CD8-positive, alpha-beta T cell (primary cell): ENCODE measurements at regions of chr11 and their contacts with region 1.

Region 1: GRCh38 chr11:104758032-104758431 is 140.2 kb downstream of the CASP12 start:
- DNase-seq: no peak
- ATAC-seq: no peak
- H3K4me3 ChIP-seq: no peak overlapping the region
- H3K4me3 Mint-ChIP-seq: no peak overlapping the region
- H3K27ac ChIP-seq: no peak overlapping the region
- H3K27ac Mint-ChIP-seq: no peak overlapping the region
- H3K4me1 ChIP-seq: no peaks in the 10 kb centered on the region
- H3K4me1 Mint-ChIP-seq: no peaks in the 10 kb centered on the region
- H3K27me3 ChIP-seq: no peaks in the 10 kb centered on the region
- H3K27me3 Mint-ChIP-seq: no peaks in the 10 kb centered on the region
- CTCF ChIP-seq: no peak

Region 2: DNA sequence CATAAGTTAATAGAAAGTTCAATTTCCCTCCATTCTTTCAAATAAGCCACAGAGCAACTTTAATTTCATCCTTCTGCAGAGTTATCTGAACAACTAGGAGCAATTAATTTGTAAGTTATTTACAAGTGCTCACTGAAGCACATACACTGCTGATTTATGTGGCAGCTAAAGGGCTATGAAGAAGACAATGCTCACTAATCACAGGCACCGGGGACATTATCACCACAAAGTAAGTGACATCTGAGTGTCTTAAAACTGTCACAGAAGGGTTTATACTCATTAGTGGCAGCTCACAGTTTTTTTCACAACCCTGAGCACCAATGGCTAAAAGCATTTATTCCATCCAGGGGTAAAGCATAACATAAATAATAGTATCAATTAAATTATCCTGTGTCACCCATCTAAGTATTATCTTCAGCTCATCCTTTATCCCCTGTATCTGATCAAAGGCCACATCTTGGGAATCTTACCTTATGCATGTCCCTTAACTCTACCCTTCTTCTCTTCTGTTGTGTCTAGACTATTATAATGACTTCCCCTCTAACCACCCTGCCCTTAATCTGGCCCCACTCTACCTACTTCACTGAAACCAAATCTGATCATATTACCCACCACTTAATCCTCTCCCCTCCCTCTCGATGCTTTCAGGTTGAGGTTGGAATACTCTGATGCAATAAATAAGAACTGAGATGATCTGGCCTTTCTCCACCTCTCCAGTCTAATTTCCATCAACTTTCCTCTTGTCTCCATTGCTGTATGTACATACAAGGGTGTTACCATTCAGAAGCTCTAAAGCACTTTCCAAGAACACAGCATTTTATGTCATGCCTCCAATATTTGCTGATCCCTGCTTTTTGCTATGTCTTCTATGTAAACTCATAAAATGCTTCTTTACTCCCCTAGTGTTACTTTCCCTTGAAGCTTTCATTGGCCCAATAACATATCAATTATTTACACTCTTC is 112.5 kb before region 1 on chr11:
- CTCF ChIA-PET with region 1: no interaction called
- POLR2A ChIA-PET with region 1: no interaction called
- intact Hi-C with region 1: loop called in 1 of 2 experiments (anchors 5 kb)
- DNase-seq: no peak
- ATAC-seq: no peak
- H3K4me3 ChIP-seq: no peak overlapping the region
- H3K4me3 Mint-ChIP-seq: no peak overlapping the region
- H3K27ac ChIP-seq: no peak overlapping the region
- H3K27ac Mint-ChIP-seq: no peak overlapping the region
- H3K4me1 ChIP-seq: no peaks in the 10 kb centered on the region
- H3K4me1 Mint-ChIP-seq: peaks cover 9% of the 10 kb centered on the region
- H3K27me3 ChIP-seq: no peaks in the 10 kb centered on the region
- H3K27me3 Mint-ChIP-seq: no peaks in the 10 kb centered on the region
- CTCF ChIP-seq: no peak